CD14-positive monocyte (primary cell): ENCODE measurements at regions of chr15 and their contacts with region 1.

Region 1: GRCh38 chr15:60397772-60398445 is at the start of gene ANXA2:
- DNase-seq: peak; percentile 88 to 93 (median 90)
- H3K4me3 ChIP-seq: peak within 1 kb of the TSS; percentile 56 to 97 (median 93)
- H3K4me3 Mint-ChIP-seq: peak within 1 kb of the TSS; percentile 94 to 99
- H3K27ac ChIP-seq: peak within 1 kb of the TSS; percentile 85 to 99
- H3K27ac Mint-ChIP-seq: peak within 1 kb of the TSS; percentile 97 to 100 (median 99)
- H3K4me1 ChIP-seq: peaks cover 53 to 56% of the 10 kb centered on the region in 2 donors
- H3K4me1 Mint-ChIP-seq: peaks cover 53% of the 10 kb centered on the region
- H3K27me3 ChIP-seq: no peaks in the 10 kb centered on the region
- H3K27me3 Mint-ChIP-seq: peaks cover 0 to 6% (median 4%) of the 10 kb centered on the region in 3 donors
- CTCF ChIP-seq: no peak
- polyA plus RNA-seq, gene ANXA2: 966 to 2,079 (median 2,046) TPM

Region 2: GRCh38 chr15:59688841-59689625 is 708.9 kb before region 1 on chr15 and contains the start of gene BNIP2:
- intact Hi-C with region 1: loop called in 1 of 2 experiments (anchors 5 kb)
- DNase-seq: peak; percentile 97 to 99 (median 99)
- H3K4me3 ChIP-seq: peak within 1 kb of the TSS; percentile 69 to 98 (median 79)
- H3K4me3 Mint-ChIP-seq: peak within 1 kb of the TSS; percentile 94 to 95
- H3K27ac ChIP-seq: peak within 1 kb of the TSS; percentile 94 to 99
- H3K27ac Mint-ChIP-seq: peak within 1 kb of the TSS; percentile 99 to 100 (median 99)
- H3K4me1 ChIP-seq: peaks cover 42 to 53% of the 10 kb centered on the region in 2 donors
- H3K4me1 Mint-ChIP-seq: peaks cover 42% of the 10 kb centered on the region
- H3K27me3 ChIP-seq: no peaks in the 10 kb centered on the region
- H3K27me3 Mint-ChIP-seq: peaks cover 0 to 7% (median 0%) of the 10 kb centered on the region in 3 donors
- CTCF ChIP-seq: no peak
- polyA plus RNA-seq, gene BNIP2: 83.4 to 189 (median 136) TPM

Region 3: DNA sequence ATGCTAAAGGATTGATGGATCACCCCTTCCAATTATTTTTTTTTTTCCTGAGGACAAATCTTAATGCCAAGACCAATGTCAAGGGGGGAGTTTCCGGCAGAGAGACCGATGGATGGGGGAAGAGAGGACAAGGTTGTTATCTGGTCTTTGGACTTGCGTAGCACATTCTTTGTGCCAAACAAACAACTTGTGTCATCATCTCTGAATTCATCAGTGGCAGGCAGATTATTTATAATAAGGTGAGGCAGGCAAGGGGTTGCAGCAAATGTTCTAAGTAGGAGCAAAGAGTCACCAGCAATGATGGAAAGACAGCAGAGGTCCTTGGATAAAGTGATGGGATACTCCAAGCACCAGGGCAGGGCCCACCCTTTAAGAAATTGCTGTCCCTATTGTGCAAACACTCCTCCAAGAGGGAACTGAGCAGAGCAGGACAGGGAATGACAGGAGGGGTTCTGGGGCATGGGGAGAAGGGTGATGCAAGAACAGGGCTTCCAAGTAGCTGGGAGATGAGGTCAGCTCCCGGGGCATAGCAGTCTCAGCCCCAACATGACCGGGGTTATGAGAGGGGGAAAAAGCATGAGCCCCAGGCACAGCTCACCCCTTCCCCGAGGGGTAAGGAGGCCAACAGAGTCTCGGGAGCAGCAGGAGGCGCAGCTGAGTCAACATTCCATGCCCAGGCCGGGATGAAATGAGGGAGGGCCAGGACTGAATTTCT is 57.5 kb before region 1 on chr15:
- intact Hi-C with region 1: no loop called
- DNase-seq: no peak
- H3K4me3 ChIP-seq: no peak overlapping the region
- H3K4me3 Mint-ChIP-seq: no peak overlapping the region
- H3K27ac ChIP-seq: no peak overlapping the region
- H3K27ac Mint-ChIP-seq: no peak overlapping the region
- H3K4me1 ChIP-seq: no peaks in the 10 kb centered on the region
- H3K4me1 Mint-ChIP-seq: no peaks in the 10 kb centered on the region
- H3K27me3 ChIP-seq: no peaks in the 10 kb centered on the region
- H3K27me3 Mint-ChIP-seq: peaks cover 1 to 5% (median 3%) of the 10 kb centered on the region in 3 donors
- CTCF ChIP-seq: no peak

Region 4: GRCh38 chr15:60374628-60375081 is 23.3 kb before region 1 on chr15:
- intact Hi-C with region 1: no loop called
- DNase-seq: no peak
- H3K4me3 ChIP-seq: no peak overlapping the region
- H3K4me3 Mint-ChIP-seq: no peak overlapping the region
- H3K27ac ChIP-seq: peak overlapping the region in 1 of 2 donors; percentile 36
- H3K27ac Mint-ChIP-seq: peak overlapping the region in 2 of 7 donors; percentile 15 to 18
- H3K4me1 ChIP-seq: no peaks in the 10 kb centered on the region
- H3K4me1 Mint-ChIP-seq: no peaks in the 10 kb centered on the region
- H3K27me3 ChIP-seq: no peaks in the 10 kb centered on the region
- H3K27me3 Mint-ChIP-seq: no peaks in the 10 kb centered on the region
- CTCF ChIP-seq: no peak

Region 5: GRCh38 chr15:60408438-60409105 is 10.7 kb after region 1 on chr15:
- intact Hi-C with region 1: loop called (anchors 2 kb)
- DNase-seq: peak; percentile 86 to 97 (median 95)
- H3K4me3 ChIP-seq: peak overlapping the region in 1 of 3 experiments; percentile 36
- H3K4me3 Mint-ChIP-seq: no peak overlapping the region
- H3K27ac ChIP-seq: peak overlapping the region; percentile 84 to 87
- H3K27ac Mint-ChIP-seq: peak overlapping the region; percentile 90 to 96 (median 93)
- H3K4me1 ChIP-seq: peaks cover 32 to 38% of the 10 kb centered on the region in 2 donors
- H3K4me1 Mint-ChIP-seq: peaks cover 30% of the 10 kb centered on the region
- H3K27me3 ChIP-seq: no peaks in the 10 kb centered on the region
- H3K27me3 Mint-ChIP-seq: peaks cover 0 to 7% (median 2%) of the 10 kb centered on the region in 3 donors
- CTCF ChIP-seq: no peak

Region 6: GRCh38 chr15:60444289-60444912 is 46.5 kb after region 1 on chr15:
- intact Hi-C with region 1: loop called in 1 of 2 experiments (anchors 10 kb)
- DNase-seq: peak in 1 of 3 donors; percentile 18
- H3K4me3 ChIP-seq: no peak overlapping the region
- H3K4me3 Mint-ChIP-seq: no peak overlapping the region
- H3K27ac ChIP-seq: no peak overlapping the region
- H3K27ac Mint-ChIP-seq: peak overlapping the region in 1 of 7 donors; percentile 35
- H3K4me1 ChIP-seq: peaks cover 0 to 4% of the 10 kb centered on the region in 2 donors
- H3K4me1 Mint-ChIP-seq: no peaks in the 10 kb centered on the region
- H3K27me3 ChIP-seq: no peaks in the 10 kb centered on the region
- H3K27me3 Mint-ChIP-seq: no peaks in the 10 kb centered on the region
- CTCF ChIP-seq: peak; percentile 67